ENCODE measurements at regions of chr20 and their contacts with region 1.

Region 1: DNA sequence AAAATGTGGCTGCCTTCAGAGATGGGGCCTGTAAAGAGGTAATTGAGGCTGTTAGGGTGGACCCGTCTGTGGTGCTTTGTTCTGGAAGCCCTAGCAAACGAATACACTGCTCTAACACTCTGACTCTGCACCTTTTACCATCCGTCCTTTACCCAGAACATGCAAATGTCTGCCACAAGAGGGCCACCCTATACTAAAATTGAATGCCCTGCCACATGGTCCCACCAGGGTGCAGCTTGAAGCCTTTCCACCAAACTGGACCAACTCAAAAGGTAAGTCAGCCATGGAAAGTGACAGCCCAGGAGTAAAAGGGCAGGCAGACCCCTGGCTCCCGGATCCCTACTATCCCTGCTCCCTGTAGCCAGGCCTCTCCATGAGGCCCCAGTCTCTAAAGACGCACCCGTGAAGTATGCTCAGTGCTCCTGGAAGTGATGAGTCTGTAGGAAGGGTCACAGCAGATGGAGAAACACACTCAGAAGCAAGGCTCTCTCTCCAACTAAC is 5.8 kb upstream of the BFSP1 start:
- DNase-seq: peak; percentile 40 to 50
- ATAC-seq: peak; percentile 96 to 97
- H3K4me3 ChIP-seq: no peak overlapping the region
- H3K27ac ChIP-seq: no peak overlapping the region
- H3K4me1 ChIP-seq: no peaks in the 10 kb centered on the region
- H3K27me3 ChIP-seq: peaks cover 0 to 1% (median 0%) of the 10 kb centered on the region in 3 donors
- CTCF ChIP-seq: peak; percentile 84 to 91 (median 88)
- POLR2A ChIP-seq: no peak

Region 2: GRCh38 chr20:17604852-17605660 is 68.1 kb after region 1 on chr20:
- in situ Hi-C with region 1: loop called in 2 of 4 experiments (anchors 5 to 10 kb)
- intact Hi-C with region 1: no loop called
- DNase-seq: no peak
- ATAC-seq: no peak
- H3K4me3 ChIP-seq: no peak overlapping the region
- H3K27ac ChIP-seq: no peak overlapping the region
- H3K4me1 ChIP-seq: no peaks in the 10 kb centered on the region
- H3K27me3 ChIP-seq: no peaks in the 10 kb centered on the region
- CTCF ChIP-seq: no peak
- POLR2A ChIP-seq: no peak

Region 3: DNA sequence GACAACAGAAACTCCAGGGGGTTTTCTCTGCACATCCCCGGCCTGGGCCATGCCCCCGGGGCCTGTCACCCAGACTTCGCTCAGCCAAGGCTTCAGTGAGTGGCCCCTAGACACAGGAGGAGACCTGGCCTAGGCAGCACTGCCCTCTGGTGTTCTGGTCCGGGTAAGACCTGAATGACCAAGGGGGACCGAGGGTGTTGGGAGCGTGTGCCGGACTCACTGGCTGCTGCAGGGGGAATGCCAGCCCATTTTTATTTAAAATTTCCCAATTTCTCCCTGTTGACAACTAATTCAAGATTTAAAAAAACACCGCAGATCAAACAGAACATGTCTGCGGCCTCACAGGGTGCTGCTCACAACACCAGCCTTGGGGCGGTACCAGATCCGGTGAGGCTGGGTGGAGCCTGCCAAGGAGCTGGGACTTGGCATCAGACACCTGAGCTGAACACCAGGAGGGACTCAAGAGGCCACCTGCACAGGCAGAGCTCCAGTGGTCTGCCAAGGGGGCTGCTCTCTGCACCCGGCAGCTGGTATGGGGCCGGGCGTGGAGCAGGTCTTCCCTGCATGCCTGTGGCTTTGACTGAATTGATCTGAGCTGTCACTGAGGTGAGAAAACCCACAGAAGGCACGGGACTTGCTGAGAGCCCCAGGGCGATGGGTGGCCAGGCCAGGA is 80.7 kb after region 1 on chr20:
- in situ Hi-C with region 1: loop called in 1 of 4 experiments (anchors 5 kb)
- intact Hi-C with region 1: loop called (anchors 1 kb)
- DNase-seq: no peak
- ATAC-seq: peak; percentile 57 to 62
- H3K4me3 ChIP-seq: no peak overlapping the region
- H3K27ac ChIP-seq: no peak overlapping the region
- H3K4me1 ChIP-seq: peaks cover 0 to 7% of the 10 kb centered on the region in 2 donors
- H3K27me3 ChIP-seq: no peaks in the 10 kb centered on the region
- CTCF ChIP-seq: peak; percentile 65 to 87 (median 83)
- POLR2A ChIP-seq: no peak

Region 4: GRCh38 chr20:17898548-17898994 is 361.6 kb after region 1 on chr20:
- in situ Hi-C with region 1: loop called in 1 of 4 experiments (anchors 10 kb)
- intact Hi-C with region 1: loop called (anchors 2 kb)
- DNase-seq: peak; percentile 40 to 59
- ATAC-seq: peak; percentile 51 to 81
- H3K4me3 ChIP-seq: no peak overlapping the region
- H3K27ac ChIP-seq: no peak overlapping the region
- H3K4me1 ChIP-seq: peaks cover 19 to 23% of the 10 kb centered on the region in 2 donors
- H3K27me3 ChIP-seq: no peaks in the 10 kb centered on the region
- CTCF ChIP-seq: peak; percentile 84 to 94 (median 85)
- POLR2A ChIP-seq: no peak

Region 5: DNA sequence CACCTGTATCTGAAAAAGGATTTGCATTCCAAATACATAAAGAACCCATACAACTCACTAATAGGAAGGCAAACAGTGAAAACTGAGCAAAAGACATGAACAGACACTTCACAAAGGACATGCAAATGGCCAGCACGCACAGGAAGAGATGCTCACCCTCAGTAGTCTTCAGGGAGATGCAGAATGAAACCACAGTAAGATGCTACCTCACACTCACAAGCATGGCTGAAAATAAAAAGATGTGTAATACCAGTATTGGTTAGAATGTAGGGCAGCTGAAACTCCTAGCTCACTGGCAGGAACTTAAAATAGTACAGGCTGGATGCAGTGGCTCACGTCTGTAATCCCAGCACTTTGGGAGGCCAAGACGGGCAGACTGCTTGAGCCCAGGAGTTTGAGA is 367.0 kb after region 1 on chr20:
- in situ Hi-C with region 1: loop called in 1 of 4 experiments (anchors 10 kb)
- intact Hi-C with region 1: loop called (anchors 2 kb)
- DNase-seq: no peak
- ATAC-seq: peak in 1 of 2 donors; percentile 90
- H3K4me3 ChIP-seq: no peak overlapping the region
- H3K27ac ChIP-seq: no peak overlapping the region
- H3K4me1 ChIP-seq: no peaks in the 10 kb centered on the region
- H3K27me3 ChIP-seq: no peaks in the 10 kb centered on the region
- CTCF ChIP-seq: no peak
- POLR2A ChIP-seq: no peak

Region 6: DNA sequence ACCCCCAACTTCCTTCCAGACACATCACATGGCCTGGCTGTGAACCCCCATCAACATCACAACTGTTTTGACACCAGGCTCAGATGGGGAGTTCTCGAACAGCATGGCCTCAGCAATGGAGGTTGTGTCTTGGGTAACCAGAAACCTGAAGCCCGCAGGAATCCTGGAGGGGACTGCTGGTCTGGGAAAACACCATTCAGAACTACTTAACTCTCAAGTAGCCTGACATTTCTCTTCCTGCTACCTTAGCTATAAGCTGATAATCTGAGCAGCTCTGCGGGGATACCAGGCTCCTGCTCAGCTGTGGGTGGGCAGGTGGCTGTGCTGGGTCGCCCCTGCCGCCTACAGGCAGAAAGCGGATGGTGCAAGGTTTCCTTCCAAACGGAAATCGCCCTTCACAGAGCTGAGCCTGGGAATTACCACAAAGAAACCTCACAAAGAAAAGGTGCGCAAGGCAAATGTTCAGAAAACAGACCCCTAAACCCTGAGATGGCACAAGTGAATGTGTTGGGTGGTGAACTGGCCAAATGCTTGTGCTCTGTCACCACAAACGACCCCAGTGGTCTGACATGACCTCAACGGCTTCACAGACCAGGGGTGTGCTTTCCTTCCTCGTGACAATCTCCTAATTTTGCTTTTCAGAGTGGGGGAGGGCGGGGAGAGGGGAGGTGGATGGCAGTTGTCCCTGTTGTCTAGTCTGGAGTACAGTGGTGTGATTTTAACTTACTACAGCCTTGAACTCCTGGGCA is 402.1 kb after region 1 on chr20:
- in situ Hi-C with region 1: loop called in 2 of 4 experiments (anchors 10 to 25 kb)
- intact Hi-C with region 1: no loop called
- DNase-seq: peak in 1 of 2 donors; percentile 56
- ATAC-seq: peak; percentile 54 to 68
- H3K4me3 ChIP-seq: no peak overlapping the region
- H3K27ac ChIP-seq: peak overlapping the region; percentile 16 to 62 (median 26)
- H3K4me1 ChIP-seq: peaks cover 30 to 44% of the 10 kb centered on the region in 2 donors
- H3K27me3 ChIP-seq: no peaks in the 10 kb centered on the region
- CTCF ChIP-seq: peak; percentile 79 to 88 (median 83)
- POLR2A ChIP-seq: no peak